Heart left ventricle (tissue), 16 donors: ENCODE measurements at regions of chr16 and their contacts with region 1.

Region 1: GRCh38 chr16:57994778-57995177 is 5.7 kb downstream of the ZNF319 start:
- DNase-seq: peak in 4 of 5 donors; percentile 54 to 76 (median 70)
- ATAC-seq: peak in 3 of 4 donors; percentile 42 to 73 (median 51)
- H3K4me3 ChIP-seq: no peak overlapping the region
- H3K27ac ChIP-seq: peak overlapping the region in 1 of 12 donors; percentile 24
- H3K4me1 ChIP-seq: peaks cover 3 to 56% (median 26%) of the 10 kb centered on the region in 12 donors
- H3K27me3 ChIP-seq: no peaks in the 10 kb centered on the region
- CTCF ChIP-seq: peak in 7 of 12 donors; percentile 7 to 43 (median 36)
- POLR2A ChIP-seq: no peak

Region 2: DNA sequence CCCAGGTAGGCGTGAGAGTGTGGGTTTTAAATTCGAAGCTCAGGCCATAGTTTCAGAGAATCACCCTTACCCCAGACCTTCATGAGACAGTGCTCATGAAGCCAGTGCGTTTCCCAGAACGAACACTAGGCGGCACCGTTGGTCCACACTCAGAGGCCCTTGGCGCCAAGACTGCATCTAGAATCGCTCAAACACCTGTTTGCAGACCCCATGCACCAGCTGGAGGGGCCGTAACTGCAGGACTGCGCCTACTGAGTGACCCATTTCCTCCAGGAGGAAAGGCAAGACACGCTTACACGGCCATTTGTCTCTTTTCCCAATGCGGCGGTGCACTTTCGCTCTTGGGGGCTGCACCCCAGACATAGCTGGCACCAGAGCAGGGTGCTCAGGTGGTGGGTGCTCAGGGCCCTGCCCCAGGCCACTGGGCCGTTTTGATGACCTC is 418.3 kb before region 1 on chr16:
- intact Hi-C with region 1: loop called in 2 of 10 experiments (anchors 5 to 10 kb)
- DNase-seq: peak; percentile 56 to 83 (median 68)
- ATAC-seq: peak; percentile 56 to 81 (median 78)
- H3K4me3 ChIP-seq: no peak overlapping the region
- H3K27ac ChIP-seq: peak overlapping the region in 1 of 12 donors; percentile 75
- H3K4me1 ChIP-seq: peaks cover 0 to 4% (median 0%) of the 10 kb centered on the region in 12 donors
- H3K27me3 ChIP-seq: peaks cover 0 to 17% (median 0%) of the 10 kb centered on the region in 9 donors
- CTCF ChIP-seq: peak; percentile 86 to 96 (median 93)
- POLR2A ChIP-seq: no peak

Region 3: DNA sequence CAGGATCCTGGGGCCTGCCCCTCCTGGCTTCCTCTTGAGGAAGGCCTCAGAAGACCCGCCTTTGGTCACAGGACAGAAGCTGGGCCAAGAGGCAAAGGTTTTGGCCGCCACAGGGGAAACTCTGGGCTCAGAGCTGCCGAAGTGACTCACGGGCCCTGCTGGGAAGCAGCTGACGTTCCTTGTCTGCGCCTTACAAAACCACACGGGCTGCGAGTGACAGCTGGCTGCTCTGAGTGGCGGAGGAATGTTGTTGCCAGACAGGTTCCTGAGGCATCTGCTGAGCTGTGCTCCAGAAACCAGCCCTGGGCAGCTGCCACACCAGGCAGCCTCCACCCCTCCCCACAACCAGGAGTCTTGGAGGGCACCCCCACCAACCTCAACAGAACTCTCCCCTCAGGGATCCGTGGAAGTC is 178.4 kb before region 1 on chr16:
- intact Hi-C with region 1: no loop called
- DNase-seq: peak; percentile 86 to 97 (median 92)
- ATAC-seq: peak; percentile 94 to 98 (median 98)
- H3K4me3 ChIP-seq: no peak overlapping the region
- H3K27ac ChIP-seq: peak overlapping the region; percentile 16 to 90 (median 86)
- H3K4me1 ChIP-seq: peaks cover 7 to 21% (median 17%) of the 10 kb centered on the region in 12 donors
- H3K27me3 ChIP-seq: no peaks in the 10 kb centered on the region
- CTCF ChIP-seq: no peak
- POLR2A ChIP-seq: peak in 1 of 2 donors; percentile 32

Region 4: DNA sequence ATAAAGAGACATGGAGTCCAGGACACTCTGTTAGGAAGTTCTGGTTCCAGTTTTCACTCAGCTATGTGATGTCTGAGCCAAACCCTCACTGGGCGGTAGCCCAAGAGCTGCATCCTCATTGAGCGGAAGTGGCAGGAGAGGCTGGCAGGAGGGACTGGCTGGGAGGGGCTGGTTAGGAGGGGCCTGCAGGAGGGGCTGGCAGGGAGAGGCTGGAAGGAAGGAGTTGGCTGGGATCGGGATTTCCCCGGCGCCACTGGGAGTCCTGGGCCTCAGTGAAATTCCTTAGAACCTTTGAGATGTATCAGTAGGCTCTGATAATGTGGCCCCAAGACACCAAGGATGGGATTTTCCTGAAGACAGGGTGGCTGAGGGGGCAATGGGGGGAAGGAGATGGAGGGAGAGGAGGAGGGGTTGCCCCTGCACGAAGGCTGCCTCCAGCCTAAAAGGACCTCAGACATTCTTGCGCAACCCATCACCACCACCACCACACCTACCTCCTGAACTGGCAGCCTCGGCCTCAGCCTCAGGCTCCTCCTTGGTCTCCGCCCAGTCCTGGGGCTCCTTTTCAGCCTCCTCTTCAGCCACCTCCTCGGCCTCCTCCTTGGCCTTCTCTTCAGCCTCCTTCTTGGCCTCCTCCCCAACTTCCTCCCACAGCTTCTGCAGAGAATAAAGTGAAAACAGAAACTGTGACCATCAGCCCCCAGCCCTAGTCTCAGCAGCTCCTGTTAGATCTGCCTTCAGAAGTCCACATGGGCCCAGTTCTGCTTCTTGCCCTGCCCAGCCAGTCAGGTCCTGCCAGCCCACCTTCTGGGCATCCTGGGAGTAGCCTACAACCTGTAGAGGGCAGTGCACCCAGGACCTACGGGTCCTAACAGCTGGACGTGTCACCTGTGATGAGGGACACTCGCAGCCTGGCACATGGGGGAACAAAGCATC is 55.6 kb before region 1 on chr16:
- intact Hi-C with region 1: loop called in 1 of 10 experiments (anchors 5 kb)
- DNase-seq: peak; percentile 65 to 89 (median 85)
- ATAC-seq: peak; percentile 83 to 96 (median 92)
- H3K4me3 ChIP-seq: no peak overlapping the region
- H3K27ac ChIP-seq: peak overlapping the region in 8 of 12 donors; percentile 31 to 80 (median 57)
- H3K4me1 ChIP-seq: peaks cover 0 to 42% (median 9%) of the 10 kb centered on the region in 12 donors
- H3K27me3 ChIP-seq: peaks cover 0 to 5% (median 0%) of the 10 kb centered on the region in 9 donors
- CTCF ChIP-seq: peak in 1 of 12 donors; percentile 16
- POLR2A ChIP-seq: no peak